AG04449 (cell line): ENCODE measurements at regions of chrX and their contacts with region 1.

Region 1: GRCh38 chrX:43958529-43958928 is 14.7 kb downstream of the NDP start:
- DNase-seq: peak; percentile 46
- H3K4me3 ChIP-seq: no peak overlapping the region
- CTCF ChIP-seq: peak; percentile 53

Region 2: GRCh38 chrX:43969504-43970501 is 11.3 kb after region 1 on chrX:
- CTCF ChIA-PET with region 1: interaction called, 13 read pairs
- POLR2A ChIA-PET with region 1: no interaction called
- DNase-seq: no peak
- H3K4me3 ChIP-seq: no peak overlapping the region
- CTCF ChIP-seq: no peak

Region 3: GRCh38 chrX:44025555-44025954 is 67.0 kb after region 1 on chrX:
- CTCF ChIA-PET with region 1: interaction called, 55 read pairs
- POLR2A ChIA-PET with region 1: no interaction called
- DNase-seq: no peak
- H3K4me3 ChIP-seq: no peak overlapping the region
- CTCF ChIP-seq: no peak

Region 4: DNA sequence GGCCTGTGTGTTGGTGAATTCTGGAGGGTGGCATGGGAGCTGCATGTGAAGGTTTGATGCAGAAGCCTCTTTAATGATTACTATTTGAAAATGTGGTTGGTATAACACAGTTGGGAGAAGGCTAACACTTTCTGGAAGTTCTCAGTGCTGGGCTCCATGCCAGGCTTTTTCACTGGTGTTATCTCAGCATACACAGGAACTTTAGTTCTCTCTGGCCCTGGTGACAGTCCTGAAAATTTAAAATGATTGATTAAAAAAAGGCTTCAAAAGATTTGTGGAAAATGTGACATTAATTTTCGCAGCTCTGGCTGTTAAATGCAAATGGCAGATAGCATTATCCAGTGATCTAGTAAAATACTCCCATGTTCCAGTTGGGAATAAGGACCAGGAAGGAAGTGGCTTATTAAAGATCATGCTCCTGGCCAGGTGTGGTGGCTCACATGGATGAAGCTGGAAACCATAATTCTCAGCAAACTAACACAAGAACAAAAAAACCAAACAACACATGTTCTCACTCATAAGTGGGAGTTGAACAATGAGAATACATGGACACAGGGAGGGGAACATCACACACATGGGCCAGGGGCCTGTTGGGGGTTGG is 1205.6 kb after region 1 on chrX:
- CTCF ChIA-PET with region 1: no interaction called
- POLR2A ChIA-PET with region 1: no interaction called
- DNase-seq: no peak
- H3K4me3 ChIP-seq: no peak overlapping the region
- CTCF ChIP-seq: no peak